Ovary (tissue), 10 donors: ENCODE measurements at regions of chr2 and their contacts with region 1.

Region 1: DNA sequence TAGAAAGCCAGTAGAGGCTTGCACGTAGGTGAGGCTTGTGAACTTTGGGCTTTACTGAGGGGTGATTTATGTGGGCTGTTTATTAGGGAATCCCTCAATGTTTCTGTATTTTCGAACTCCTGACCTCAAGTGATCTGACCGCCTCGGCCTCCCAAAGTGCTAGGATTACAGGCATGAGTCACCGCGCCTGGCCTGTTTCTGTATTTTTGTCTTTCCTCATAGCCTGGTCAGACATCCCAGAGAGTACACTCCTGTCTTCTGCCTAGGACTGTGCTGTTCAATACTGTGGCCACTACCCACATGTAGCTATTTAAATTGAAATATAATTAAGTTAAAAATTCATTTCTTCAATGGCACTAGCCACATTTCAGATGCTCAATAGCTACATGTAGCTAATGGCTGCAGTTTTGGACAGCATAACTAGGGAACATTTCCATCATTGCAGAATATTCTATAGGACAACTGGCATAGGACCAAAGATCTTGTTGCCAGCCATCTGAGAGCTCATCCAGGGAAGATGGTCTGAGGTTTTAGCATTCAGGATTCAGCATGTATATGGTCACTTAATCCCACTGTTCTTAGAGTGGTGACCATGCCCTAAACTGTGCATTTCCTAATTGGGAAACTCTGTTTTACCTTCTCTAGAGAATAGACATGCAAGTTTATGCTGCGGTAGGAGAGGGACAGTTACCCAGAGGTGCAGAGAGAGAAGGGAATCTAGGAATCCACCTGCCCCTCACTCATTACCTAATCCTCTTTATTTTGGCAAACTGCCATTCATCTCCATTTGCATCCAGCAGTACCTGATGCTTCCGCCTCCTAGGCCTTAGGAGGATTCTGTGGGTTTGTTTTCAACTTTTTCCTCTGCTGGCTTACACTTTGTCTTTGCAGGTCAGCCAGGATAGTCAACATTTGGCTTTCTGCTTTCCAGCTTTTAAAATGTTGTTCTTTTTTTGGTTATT is 64.4 kb downstream of the LCLAT1 start:
- DNase-seq: peak; percentile 49 to 73 (median 56)
- H3K4me3 ChIP-seq: no peak overlapping the region
- H3K27ac ChIP-seq: peak overlapping the region in 1 of 2 donors; percentile 26
- H3K4me1 ChIP-seq: peaks cover 10% of the 10 kb centered on the region
- H3K27me3 ChIP-seq: no peaks in the 10 kb centered on the region
- CTCF ChIP-seq: no peak
- EP300 ChIP-seq: no peak
- POLR2A ChIP-seq: no peak

Region 2: GRCh38 chr2:30686000-30686399 is 174.6 kb after region 1 on chr2:
- intact Hi-C with region 1: loop called in 1 of 4 experiments (anchors 5 kb)
- DNase-seq: no peak
- H3K4me3 ChIP-seq: no peak overlapping the region
- H3K27ac ChIP-seq: no peak overlapping the region
- H3K4me1 ChIP-seq: peaks cover 12% of the 10 kb centered on the region
- H3K27me3 ChIP-seq: no peaks in the 10 kb centered on the region
- CTCF ChIP-seq: no peak
- EP300 ChIP-seq: no peak
- POLR2A ChIP-seq: no peak

Region 3: GRCh38 chr2:30736461-30737325 is 225.3 kb after region 1 on chr2:
- intact Hi-C with region 1: no loop called
- DNase-seq: no peak
- H3K4me3 ChIP-seq: no peak overlapping the region
- H3K27ac ChIP-seq: no peak overlapping the region
- H3K4me1 ChIP-seq: no peaks in the 10 kb centered on the region
- H3K27me3 ChIP-seq: no peaks in the 10 kb centered on the region
- CTCF ChIP-seq: no peak
- EP300 ChIP-seq: no peak
- POLR2A ChIP-seq: no peak